AG04449 (cell line): ENCODE measurements at regions of chr5 and their contacts with region 1.

Region 1: GRCh38 chr5:156824800-156825199 is 25.3 kb upstream of the PPP1R2B start:
- DNase-seq: peak; percentile 4
- H3K4me3 ChIP-seq: no peak overlapping the region
- CTCF ChIP-seq: peak; percentile 37

Region 2: DNA sequence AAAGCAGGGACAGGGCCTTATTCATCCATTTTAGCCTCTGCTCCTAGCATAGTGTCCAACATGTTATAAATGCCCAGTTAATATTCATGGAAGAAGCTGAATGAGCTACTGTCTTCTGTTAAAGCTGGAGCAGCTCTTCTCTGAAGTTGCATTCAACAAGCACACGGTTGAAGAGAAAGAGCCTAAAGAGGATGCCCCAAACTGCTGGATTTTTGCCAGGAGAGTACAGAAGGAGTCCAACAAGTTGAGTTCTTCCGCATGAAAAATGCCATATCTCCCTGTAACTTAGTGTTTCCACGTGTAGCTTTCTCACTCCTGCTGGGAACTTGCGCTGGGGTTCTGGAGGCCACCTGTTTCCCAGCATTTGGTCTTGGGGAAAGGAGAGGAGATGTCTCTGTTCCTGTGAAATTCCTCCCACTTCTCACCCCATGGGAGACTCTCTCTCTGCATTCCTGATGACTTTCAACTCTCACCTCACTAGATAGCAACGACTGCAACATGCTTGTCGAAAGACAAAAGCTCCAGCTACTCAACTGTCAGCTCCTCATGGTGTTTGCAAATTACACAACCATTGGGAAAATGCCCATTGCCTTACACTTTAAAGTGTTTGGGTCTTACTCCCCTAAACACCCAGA is 1688.5 kb before region 1 on chr5:
- CTCF ChIA-PET with region 1: interaction called, 20 read pairs
- POLR2A ChIA-PET with region 1: no interaction called
- DNase-seq: no peak
- H3K4me3 ChIP-seq: no peak overlapping the region
- CTCF ChIP-seq: no peak

Region 3: GRCh38 chr5:155700333-155700732 is 1124.5 kb before region 1 on chr5:
- CTCF ChIA-PET with region 1: interaction called, 26 read pairs
- POLR2A ChIA-PET with region 1: no interaction called
- DNase-seq: no peak
- H3K4me3 ChIP-seq: no peak overlapping the region
- CTCF ChIP-seq: peak; percentile 45

Region 4: DNA sequence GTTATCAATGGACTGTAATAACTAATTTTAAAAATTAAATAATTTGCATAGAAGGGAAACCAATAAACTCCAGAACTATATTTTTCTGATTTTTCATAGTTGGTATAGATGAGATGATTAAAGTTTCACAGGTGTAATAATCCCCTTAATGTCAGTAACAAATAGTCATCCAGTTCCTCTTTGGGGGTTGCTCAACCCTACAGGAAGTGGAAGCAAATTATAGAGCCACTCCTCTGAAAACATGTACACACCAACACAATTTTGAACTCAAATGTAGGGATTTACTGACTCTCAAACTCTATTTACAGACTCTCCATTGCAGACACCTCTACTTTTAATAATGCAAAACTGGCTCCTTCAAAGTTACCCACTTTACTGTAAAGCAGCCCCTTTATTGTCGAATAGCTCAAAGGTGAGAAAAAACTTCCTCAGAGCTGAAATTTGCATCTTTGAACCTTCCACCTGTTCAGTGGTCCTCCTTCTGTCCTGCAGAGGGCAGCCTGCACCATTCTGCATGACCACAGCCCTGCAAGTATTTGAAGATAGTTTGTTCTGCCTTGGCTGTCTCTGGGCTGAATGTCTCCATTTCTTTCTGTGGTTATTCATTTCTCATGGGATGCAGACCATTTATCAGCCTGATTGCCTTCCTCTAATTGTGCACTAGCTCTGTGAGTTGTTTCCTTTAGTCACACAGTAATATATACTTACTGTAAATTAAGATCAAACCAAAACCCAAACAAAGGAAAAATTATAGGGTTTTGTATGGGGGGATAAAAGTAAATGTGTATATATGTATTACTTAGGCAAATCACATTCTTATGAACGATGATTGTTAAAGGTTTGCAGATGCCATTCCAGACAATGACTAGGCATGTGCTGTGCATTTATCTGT is 881.0 kb before region 1 on chr5:
- CTCF ChIA-PET with region 1: interaction called, 15 read pairs
- POLR2A ChIA-PET with region 1: interaction called, 3 read pairs
- DNase-seq: no peak
- H3K4me3 ChIP-seq: no peak overlapping the region
- CTCF ChIP-seq: peak; percentile 90

Region 5: GRCh38 chr5:156799171-156799570 is 25.6 kb before region 1 on chr5:
- CTCF ChIA-PET with region 1: no interaction called
- POLR2A ChIA-PET with region 1: no interaction called
- DNase-seq: no peak
- H3K4me3 ChIP-seq: no peak overlapping the region
- CTCF ChIP-seq: no peak